Left lung (tissue), 14 donors: ENCODE measurements at regions of chr20 and their contacts with region 1.

Region 1: GRCh38 chr20:25178563-25179438 is 16.7 kb upstream of the ENTPD6 start:
- DNase-seq: peak in 2 of 4 donors; percentile 45 to 74
- ATAC-seq: peak; percentile 92
- H3K4me3 ChIP-seq: no peak overlapping the region
- H3K27ac ChIP-seq: peak overlapping the region; percentile 19 to 55
- H3K4me1 ChIP-seq: peaks cover 7 to 9% of the 10 kb centered on the region in 2 donors
- H3K27me3 ChIP-seq: no peaks in the 10 kb centered on the region
- CTCF ChIP-seq: peak; percentile 44 to 54

Region 2: GRCh38 chr20:24933266-24933908 is 245.4 kb before region 1 on chr20:
- intact Hi-C with region 1: no loop called
- DNase-seq: no peak
- ATAC-seq: no peak
- H3K4me3 ChIP-seq: no peak overlapping the region
- H3K27ac ChIP-seq: no peak overlapping the region
- H3K4me1 ChIP-seq: peaks cover 0 to 16% of the 10 kb centered on the region in 2 donors
- H3K27me3 ChIP-seq: no peaks in the 10 kb centered on the region
- CTCF ChIP-seq: no peak

Region 3: GRCh38 chr20:24992487-24993205 is 186.2 kb before region 1 on chr20 and contains the start of gene APMAP:
- intact Hi-C with region 1: loop called in 1 of 2 experiments (anchors 10 kb)
- DNase-seq: peak; percentile 96 to 99 (median 96)
- ATAC-seq: peak; percentile 97
- H3K4me3 ChIP-seq: peak within 1 kb of the TSS; percentile 89 to 95
- H3K27ac ChIP-seq: peak within 1 kb of the TSS; percentile 93 to 96
- H3K4me1 ChIP-seq: peaks cover 11 to 65% of the 10 kb centered on the region in 2 donors
- H3K27me3 ChIP-seq: no peaks in the 10 kb centered on the region
- CTCF ChIP-seq: no peak
- polyA plus RNA-seq, gene APMAP: 76.2 to 90.2 (median 83.3) TPM

Region 4: GRCh38 chr20:25076731-25077609 is 101.8 kb before region 1 on chr20:
- intact Hi-C with region 1: loop called in 1 of 2 experiments (anchors 10 kb)
- DNase-seq: no peak
- ATAC-seq: peak; percentile 53
- H3K4me3 ChIP-seq: peak overlapping the region in 1 of 2 donors; percentile 3
- H3K27ac ChIP-seq: no peak overlapping the region
- H3K4me1 ChIP-seq: peaks cover 0 to 20% of the 10 kb centered on the region in 2 donors
- H3K27me3 ChIP-seq: peaks cover 74 to 89% of the 10 kb centered on the region in 2 donors
- CTCF ChIP-seq: peak in 1 of 2 donors; percentile 14

Region 5: DNA sequence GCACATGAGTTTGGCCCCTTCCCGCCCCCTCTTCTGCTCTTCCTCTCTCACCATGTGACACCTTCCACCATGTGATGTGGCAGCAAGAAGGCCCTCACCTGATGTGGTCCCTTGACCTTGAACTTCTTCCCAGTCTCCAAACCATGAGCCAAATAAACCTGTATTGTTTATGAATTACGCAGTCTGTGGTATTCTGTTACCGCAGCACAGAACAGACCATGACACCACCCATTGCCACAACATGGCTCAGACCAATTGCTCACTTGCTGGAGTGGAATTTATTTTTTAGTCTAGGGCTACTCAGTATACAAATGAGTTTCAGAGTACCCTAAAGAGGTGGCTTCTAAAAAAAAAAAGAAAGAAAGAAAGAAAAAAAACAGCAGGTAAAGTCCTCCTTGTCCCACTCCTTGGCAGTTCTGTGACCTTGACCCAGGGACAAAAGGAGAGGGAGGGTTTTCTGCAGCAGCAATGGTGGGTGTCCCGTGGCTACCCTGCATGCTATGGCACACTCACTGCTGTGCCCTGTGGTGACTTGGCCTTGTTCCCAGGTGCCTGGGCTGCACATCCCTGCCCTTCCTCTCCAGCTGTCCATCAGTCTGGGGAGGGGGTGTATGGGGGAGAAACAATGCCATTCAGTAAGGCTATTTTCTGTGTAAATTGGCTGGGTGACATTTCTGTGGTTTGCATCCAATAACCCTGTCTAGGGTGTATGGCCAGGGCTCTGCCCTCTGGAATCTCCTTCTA is 91.4 kb before region 1 on chr20:
- intact Hi-C with region 1: no loop called
- DNase-seq: no peak
- ATAC-seq: no peak
- H3K4me3 ChIP-seq: no peak overlapping the region
- H3K27ac ChIP-seq: no peak overlapping the region
- H3K4me1 ChIP-seq: peaks cover 3 to 9% of the 10 kb centered on the region in 2 donors
- H3K27me3 ChIP-seq: peaks cover 44 to 83% of the 10 kb centered on the region in 2 donors
- CTCF ChIP-seq: no peak